MCF 10A (cell line): ENCODE measurements at regions of chr22 and their contacts with region 1.

Region 1: GRCh38 chr22:30423982-30424963 is 1.3 kb upstream of the MTFP1 start:
- DNase-seq: peak; percentile 100
- H3K4me3 Mint-ChIP-seq: peak overlapping the region; percentile 90
- H3K27ac Mint-ChIP-seq: peak overlapping the region; percentile 97
- H3K4me1 Mint-ChIP-seq: peaks cover 44% of the 10 kb centered on the region
- H3K27me3 Mint-ChIP-seq: no peaks in the 10 kb centered on the region
- CTCF ChIP-seq: peak; percentile 10

Region 2: GRCh38 chr22:30205281-30206115 is 218.8 kb before region 1 on chr22:
- CTCF ChIA-PET with region 1: no interaction called
- POLR2A ChIA-PET with region 1: no interaction called
- intact Hi-C with region 1: loop called (anchors 5 kb)
- DNase-seq: peak; percentile 95
- H3K4me3 Mint-ChIP-seq: peak overlapping the region; percentile 57
- H3K27ac Mint-ChIP-seq: peak overlapping the region; percentile 75
- H3K4me1 Mint-ChIP-seq: peaks cover 49% of the 10 kb centered on the region
- H3K27me3 Mint-ChIP-seq: no peaks in the 10 kb centered on the region
- CTCF ChIP-seq: no peak

Region 3: DNA sequence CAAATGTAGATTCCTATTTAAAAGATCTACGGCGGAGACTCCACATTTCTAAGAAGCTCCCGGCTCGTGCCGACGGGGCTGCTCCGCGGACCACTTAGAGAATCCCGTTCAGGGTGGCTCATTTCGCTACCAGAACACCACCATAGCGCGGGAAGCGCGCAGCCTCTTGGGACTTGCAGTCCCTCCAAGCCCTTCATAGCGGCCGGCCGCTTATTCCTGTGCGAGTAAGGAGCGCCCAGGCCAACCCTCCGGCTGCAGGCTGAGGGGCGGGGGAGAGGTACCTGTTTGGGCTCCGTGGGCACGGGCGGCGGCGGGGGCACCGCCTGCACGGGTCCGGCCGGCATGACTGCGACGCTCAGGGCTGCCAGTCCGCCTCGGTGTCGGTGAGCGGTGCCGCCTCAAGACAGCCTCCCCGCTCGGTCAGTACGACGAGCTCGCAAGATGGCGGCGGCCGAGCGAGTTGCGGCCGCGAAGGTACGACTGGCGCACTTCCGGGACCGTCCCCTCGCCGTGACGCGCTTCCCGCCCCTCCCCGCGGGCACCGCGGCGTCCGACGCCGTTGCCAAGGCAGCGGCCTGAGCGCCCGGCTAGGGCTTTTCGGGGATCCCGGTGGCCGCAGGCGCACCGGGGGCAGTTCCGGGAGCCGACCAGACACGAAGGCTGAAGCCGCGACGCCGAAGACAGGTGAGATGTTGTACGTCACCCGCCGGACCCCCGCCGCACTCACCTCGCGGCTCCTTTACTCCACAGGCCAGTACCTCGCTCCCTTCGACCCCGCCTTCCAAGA is 67.6 kb before region 1 on chr22 and contains the starts of genes CCDC157 and SF3A1:
- CTCF ChIA-PET with region 1: no interaction called
- POLR2A ChIA-PET with region 1: interaction called, 18 read pairs
- intact Hi-C with region 1: no loop called
- DNase-seq: peak; percentile 86
- H3K4me3 Mint-ChIP-seq: peak within 1 kb of the TSS; percentile 94
- H3K27ac Mint-ChIP-seq: peak within 1 kb of the TSS; percentile 89
- H3K4me1 Mint-ChIP-seq: peaks cover 28% of the 10 kb centered on the region
- H3K27me3 Mint-ChIP-seq: no peaks in the 10 kb centered on the region
- CTCF ChIP-seq: no peak
- total RNA-seq, gene CCDC157: 1.1 and 1.7 TPM in 2 replicates
- total RNA-seq, gene SF3A1: 167 and 193 TPM in 2 replicates

Region 4: DNA sequence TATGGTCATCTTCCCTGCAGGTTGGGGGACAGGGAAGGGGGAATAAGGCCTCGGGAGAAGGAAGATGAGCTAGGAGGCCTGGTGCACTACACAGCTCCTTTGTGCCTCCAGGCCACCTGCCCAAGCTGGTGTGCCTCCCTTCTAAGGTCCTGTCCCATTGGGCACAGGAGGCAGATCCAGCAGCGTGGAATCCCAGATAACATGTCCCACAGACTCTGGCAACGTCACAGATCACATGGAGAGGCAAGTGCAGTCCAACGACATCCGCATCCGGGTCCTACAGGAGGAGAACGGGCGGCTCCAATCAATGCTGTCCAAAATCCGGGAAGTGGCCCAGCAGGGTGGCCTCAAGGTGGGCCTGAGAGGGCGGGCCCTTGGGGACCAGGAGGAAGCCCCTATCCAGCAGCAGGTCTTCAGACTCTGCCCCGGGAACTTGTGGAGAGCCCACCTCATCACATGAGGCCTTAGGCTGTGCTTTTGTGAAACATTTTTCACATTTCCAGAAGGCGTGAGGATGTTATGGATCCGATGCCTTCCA is 48.9 kb before region 1 on chr22:
- CTCF ChIA-PET with region 1: no interaction called
- POLR2A ChIA-PET with region 1: no interaction called
- intact Hi-C with region 1: no loop called
- DNase-seq: no peak
- H3K4me3 Mint-ChIP-seq: no peak overlapping the region
- H3K27ac Mint-ChIP-seq: no peak overlapping the region
- H3K4me1 Mint-ChIP-seq: no peaks in the 10 kb centered on the region
- H3K27me3 Mint-ChIP-seq: no peaks in the 10 kb centered on the region
- CTCF ChIP-seq: no peak

Region 5: DNA sequence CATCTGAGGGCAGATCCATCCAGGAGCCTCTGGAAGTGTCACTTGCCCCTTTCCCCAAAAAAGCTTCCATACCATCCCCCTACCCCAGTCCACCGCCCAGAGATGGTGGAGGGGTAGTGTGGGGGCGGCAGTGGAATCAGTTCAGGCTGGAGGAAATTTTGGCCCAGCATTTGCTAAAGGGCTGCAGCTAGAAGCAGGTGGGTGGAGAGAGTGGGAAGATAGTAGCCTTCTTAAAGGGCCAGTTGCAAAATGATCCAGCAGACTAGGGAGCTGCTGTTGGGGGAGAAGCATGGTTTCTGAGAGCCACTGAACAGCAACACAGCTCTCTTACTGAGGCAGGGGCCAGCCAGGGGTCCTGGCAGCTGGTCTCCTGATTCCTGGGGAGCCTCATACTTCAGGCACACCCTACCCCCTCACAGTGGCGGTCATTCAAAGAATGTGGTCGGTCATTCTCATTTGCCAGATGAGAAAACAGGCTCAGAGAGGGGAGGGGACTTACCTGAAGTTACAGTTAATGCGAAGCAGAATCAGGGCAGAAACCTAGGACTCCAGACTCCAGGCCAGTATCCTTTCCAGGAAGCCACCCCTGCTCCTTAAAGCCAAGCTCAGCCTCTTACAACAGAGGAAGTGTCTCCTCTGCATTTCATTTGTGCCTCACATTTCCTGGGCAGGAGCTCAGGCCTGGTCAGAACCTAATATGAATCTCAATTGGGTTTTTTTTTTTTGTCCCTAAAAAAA is 22.1 kb before region 1 on chr22:
- CTCF ChIA-PET with region 1: interaction called, 26 read pairs
- POLR2A ChIA-PET with region 1: interaction called, 532 read pairs
- intact Hi-C with region 1: loop called (anchors 1 kb)
- DNase-seq: no peak
- H3K4me3 Mint-ChIP-seq: no peak overlapping the region
- H3K27ac Mint-ChIP-seq: peak overlapping the region; percentile 54
- H3K4me1 Mint-ChIP-seq: peaks cover 35% of the 10 kb centered on the region
- H3K27me3 Mint-ChIP-seq: no peaks in the 10 kb centered on the region
- CTCF ChIP-seq: no peak

Region 6: DNA sequence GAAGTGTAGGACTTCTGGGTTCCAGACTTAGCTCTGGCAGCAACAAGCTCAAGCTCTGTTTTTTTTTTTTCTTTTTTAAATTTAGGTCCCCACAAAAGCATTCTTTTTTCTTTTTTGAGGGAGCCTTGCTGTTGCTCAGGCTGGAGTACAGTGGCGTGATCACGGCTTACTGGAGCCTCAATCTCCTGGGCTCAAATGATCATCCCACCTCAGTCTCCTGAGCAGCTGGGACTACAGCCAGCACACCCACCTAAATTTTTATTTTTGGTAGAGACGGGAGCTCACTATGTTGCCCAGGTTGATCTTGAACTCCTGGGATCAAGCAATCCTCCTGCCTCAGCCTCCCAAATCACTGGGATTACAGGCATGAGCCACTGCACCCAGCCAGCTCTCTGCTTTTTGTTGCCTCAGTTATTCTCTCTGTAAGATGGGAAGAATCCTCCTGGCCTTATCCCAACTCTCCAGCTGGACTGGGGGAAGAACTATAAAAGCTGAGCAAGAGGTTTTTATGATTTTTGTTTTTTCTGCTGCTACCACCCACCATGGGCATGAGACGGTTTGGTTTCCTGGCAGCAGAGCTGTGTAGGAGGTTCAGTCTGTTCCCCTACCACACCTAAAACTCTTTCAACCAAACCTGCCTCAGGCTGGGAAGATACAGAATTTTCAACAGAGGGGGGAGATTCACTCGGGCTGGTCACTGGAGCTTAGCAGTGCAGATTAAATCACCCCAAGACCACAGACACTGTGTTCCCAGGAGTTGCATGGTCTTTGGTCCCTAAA is 10.3 kb before region 1 on chr22:
- CTCF ChIA-PET with region 1: interaction called, 59 read pairs
- POLR2A ChIA-PET with region 1: interaction called, 342 read pairs
- intact Hi-C with region 1: loop called (anchors 1 kb)
- DNase-seq: peak; percentile 38
- H3K4me3 Mint-ChIP-seq: peak overlapping the region; percentile 12
- H3K27ac Mint-ChIP-seq: peak overlapping the region; percentile 66
- H3K4me1 Mint-ChIP-seq: peaks cover 41% of the 10 kb centered on the region
- H3K27me3 Mint-ChIP-seq: no peaks in the 10 kb centered on the region
- CTCF ChIP-seq: no peak